Tibial artery (tissue), 4 donors: ENCODE measurements at regions of chr4 and their contacts with region 1.

Region 1: GRCh38 chr4:99248714-99249113 is 29.7 kb upstream of the ADH6 start:
- DNase-seq: no peak
- H3K4me3 ChIP-seq: no peak overlapping the region
- H3K27ac ChIP-seq: peak overlapping the region; percentile 69 to 73
- H3K4me1 ChIP-seq: peaks cover 0 to 30% (median 7%) of the 10 kb centered on the region in 4 donors
- H3K27me3 ChIP-seq: no peaks in the 10 kb centered on the region
- CTCF ChIP-seq: no peak

Region 2: GRCh38 chr4:99300934-99301333 is 52.2 kb after region 1 on chr4:
- intact Hi-C with region 1: loop called (anchors 10 kb)
- DNase-seq: peak; percentile 93
- H3K4me3 ChIP-seq: no peak overlapping the region
- H3K27ac ChIP-seq: peak overlapping the region; percentile 69
- H3K4me1 ChIP-seq: peaks cover 0 to 26% (median 13%) of the 10 kb centered on the region in 4 donors
- H3K27me3 ChIP-seq: no peaks in the 10 kb centered on the region
- CTCF ChIP-seq: no peak